Left lung (tissue), 14 donors: ENCODE measurements at regions of chr19 and their contacts with region 1.

Region 1: GRCh38 chr19:2739602-2740313 is at the start of gene SLC39A3:
- DNase-seq: peak; percentile 94 to 99 (median 96)
- ATAC-seq: peak; percentile 100
- H3K4me3 ChIP-seq: peak within 1 kb of the TSS; percentile 63 to 99
- H3K27ac ChIP-seq: peak within 1 kb of the TSS in 1 of 2 donors; percentile 65
- H3K4me1 ChIP-seq: peaks cover 5 to 30% of the 10 kb centered on the region in 2 donors
- H3K27me3 ChIP-seq: peaks cover 0 to 36% of the 10 kb centered on the region in 2 donors
- CTCF ChIP-seq: peak in 1 of 2 donors; percentile 19
- polyA plus RNA-seq, gene SLC39A3: 18.3 to 25.3 (median 21.2) TPM

Region 2: GRCh38 chr19:2653710-2654707 is 85.7 kb before region 1 on chr19:
- intact Hi-C with region 1: loop called (anchors 5 to 10 kb)
- DNase-seq: peak in 1 of 4 donors; percentile 69
- ATAC-seq: peak; percentile 24
- H3K4me3 ChIP-seq: no peak overlapping the region
- H3K27ac ChIP-seq: no peak overlapping the region
- H3K4me1 ChIP-seq: no peaks in the 10 kb centered on the region
- H3K27me3 ChIP-seq: peaks cover 0 to 4% of the 10 kb centered on the region in 2 donors
- CTCF ChIP-seq: no peak